ENCODE measurements at regions of chr6 and their contacts with region 1.

Region 1: DNA sequence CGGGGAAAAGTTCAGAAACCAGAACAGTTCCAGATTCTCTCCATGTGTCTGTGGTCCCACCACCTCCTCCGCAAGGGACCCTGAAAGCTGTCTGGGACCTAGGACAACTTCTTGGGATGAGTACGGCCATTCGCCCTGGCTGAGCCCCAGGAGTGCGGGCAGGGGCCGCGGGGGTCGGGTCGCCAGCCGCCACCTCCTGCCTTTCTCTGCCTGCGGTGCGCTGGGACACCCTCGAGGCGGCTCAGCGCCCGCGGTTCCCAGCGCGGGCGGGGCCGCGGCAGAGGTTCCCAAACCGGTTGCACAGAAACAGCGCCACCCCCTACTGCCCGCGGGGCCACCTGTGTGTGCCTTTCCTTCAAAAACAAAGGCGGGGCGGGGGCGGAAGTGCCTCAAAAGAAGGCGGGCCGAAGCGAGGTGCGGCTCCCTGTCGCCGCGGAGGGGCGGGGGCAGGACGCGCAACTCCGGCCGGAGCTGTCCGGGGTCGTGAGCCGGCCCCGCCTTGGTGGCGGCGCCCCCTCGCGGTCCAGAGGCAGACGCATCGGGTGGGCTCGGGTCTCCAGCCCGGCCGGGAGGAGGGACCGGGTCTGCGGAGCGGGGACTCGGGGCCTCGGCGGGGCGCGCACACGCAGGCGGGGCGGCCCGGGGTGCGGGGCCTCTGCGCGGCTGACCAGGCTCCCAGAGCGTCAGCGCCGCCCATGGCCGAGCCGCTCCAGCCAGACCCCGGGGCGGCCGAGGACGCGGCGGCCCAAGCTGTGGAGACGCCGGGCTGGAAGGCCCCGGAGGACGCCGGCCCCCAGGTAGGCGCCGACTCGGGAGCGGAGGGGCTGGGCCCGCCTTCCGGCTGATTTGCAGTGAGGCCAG is at the start of gene HEBP2:
- DNase-seq: peak; percentile 98
- H3K4me3 Mint-ChIP-seq: peak within 1 kb of the TSS; percentile 81
- H3K27ac Mint-ChIP-seq: peak within 1 kb of the TSS; percentile 77
- H3K4me1 Mint-ChIP-seq: peaks cover 15% of the 10 kb centered on the region
- H3K27me3 Mint-ChIP-seq: no peaks in the 10 kb centered on the region
- total RNA-seq, gene HEBP2: 48.5 to 50.8 TPM

Region 2: GRCh38 chr6:138161338-138162110 is 242.5 kb before region 1 on chr6 and contains the start of gene ARFGEF3:
- CTCF ChIA-PET with region 1: no interaction called
- intact Hi-C with region 1: loop called (anchors 1 kb)
- DNase-seq: peak; percentile 70
- H3K4me3 Mint-ChIP-seq: peak within 1 kb of the TSS; percentile 68
- H3K27ac Mint-ChIP-seq: no peak within 1 kb of the TSS
- H3K4me1 Mint-ChIP-seq: peaks cover 11% of the 10 kb centered on the region
- H3K27me3 Mint-ChIP-seq: peaks cover 59% of the 10 kb centered on the region
- total RNA-seq, gene ARFGEF3: 0.72 TPM

Region 3: DNA sequence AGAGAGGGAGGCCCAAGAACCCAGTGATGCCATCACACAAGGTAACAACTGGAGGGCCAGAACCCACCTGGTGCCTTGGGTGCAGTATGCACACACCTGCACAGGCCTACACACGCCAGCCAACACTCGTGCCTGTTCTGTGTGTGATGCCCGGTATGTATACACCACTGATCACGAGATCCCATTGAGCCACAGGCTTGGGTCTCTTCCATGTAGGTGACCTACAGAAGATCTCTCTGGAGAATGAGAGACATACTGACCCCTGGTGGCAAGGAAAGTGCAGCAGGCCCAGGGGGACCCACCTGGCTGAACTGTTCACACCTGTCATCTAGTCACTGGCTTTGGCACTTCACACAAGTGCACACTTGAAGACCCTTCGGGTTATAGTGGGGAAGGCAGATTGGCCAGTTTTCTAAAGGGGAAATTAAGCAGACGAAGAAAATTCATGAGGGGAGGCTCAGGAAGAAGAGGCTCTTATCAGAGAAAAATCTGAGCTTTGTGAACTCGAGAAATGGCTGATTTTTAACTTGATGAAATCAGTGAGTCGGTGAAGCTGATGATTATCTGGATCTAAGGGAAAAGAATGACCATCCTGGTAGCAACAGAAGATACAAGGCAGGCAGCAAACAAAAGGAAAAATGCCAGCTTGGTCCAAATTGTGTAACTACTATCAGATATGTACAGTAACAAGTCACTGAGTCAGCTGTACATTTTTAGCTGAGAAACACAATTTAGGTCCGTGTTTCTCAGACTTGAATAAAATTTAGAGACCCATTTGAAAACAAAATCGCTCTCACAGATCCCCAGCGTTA is 116.7 kb before region 1 on chr6:
- CTCF ChIA-PET with region 1: no interaction called
- intact Hi-C with region 1: loop called (anchors 2 kb)
- DNase-seq: peak; percentile 70
- H3K4me3 Mint-ChIP-seq: no peak overlapping the region
- H3K27ac Mint-ChIP-seq: no peak overlapping the region
- H3K4me1 Mint-ChIP-seq: peaks cover 6% of the 10 kb centered on the region
- H3K27me3 Mint-ChIP-seq: no peaks in the 10 kb centered on the region

Region 4: DNA sequence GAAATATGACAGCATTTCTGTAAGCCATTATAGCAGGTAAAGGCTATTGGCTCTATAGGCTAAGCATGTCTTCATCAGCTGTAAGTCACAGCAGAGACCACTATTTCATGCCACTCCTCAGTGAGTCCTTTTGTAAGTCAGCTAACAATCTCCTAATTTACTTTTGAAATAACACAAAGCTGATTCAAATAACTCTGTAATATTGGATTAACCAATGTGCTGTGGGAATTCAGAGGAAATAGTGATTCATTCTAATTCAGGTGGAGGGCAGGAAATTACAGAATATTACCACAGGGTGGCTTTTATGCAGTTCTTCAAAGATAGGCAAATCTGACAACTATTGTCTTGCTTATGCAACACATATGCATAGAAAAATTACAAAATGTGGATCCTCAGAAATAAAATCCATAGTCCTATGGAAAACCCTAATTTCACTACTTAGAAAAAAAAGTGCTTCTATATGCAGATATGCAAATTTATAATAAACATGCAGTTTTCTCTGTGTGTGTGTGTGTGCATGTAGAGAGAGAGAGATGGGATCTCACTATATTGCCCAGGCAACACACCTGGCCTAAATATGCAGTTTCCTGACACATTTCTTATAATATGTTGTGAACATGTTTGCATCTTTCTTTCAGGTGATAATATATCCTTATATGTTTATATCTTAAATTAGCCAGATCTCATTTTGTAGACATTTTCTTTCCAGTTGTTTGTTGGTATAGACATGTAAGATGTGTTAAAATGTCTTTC is 31.1 kb before region 1 on chr6:
- CTCF ChIA-PET with region 1: interaction called, 5 read pairs
- intact Hi-C with region 1: loop called (anchors 1 kb)
- DNase-seq: no peak
- H3K4me3 Mint-ChIP-seq: no peak overlapping the region
- H3K27ac Mint-ChIP-seq: no peak overlapping the region
- H3K4me1 Mint-ChIP-seq: peaks cover 2% of the 10 kb centered on the region
- H3K27me3 Mint-ChIP-seq: no peaks in the 10 kb centered on the region

Region 5: GRCh38 chr6:138455746-138456400 is 51.8 kb after region 1 on chr6:
- CTCF ChIA-PET with region 1: no interaction called
- intact Hi-C with region 1: loop called (anchors 1 kb)
- DNase-seq: peak; percentile 16
- H3K4me3 Mint-ChIP-seq: peak overlapping the region; percentile 9
- H3K27ac Mint-ChIP-seq: peak overlapping the region; percentile 62
- H3K4me1 Mint-ChIP-seq: peaks cover 28% of the 10 kb centered on the region
- H3K27me3 Mint-ChIP-seq: no peaks in the 10 kb centered on the region

Region 6: GRCh38 chr6:138654715-138655634 is 250.9 kb after region 1 on chr6:
- CTCF ChIA-PET with region 1: no interaction called
- intact Hi-C with region 1: loop called (anchors 5 kb)
- DNase-seq: peak; percentile 76
- H3K4me3 Mint-ChIP-seq: no peak overlapping the region
- H3K27ac Mint-ChIP-seq: peak overlapping the region; percentile 36
- H3K4me1 Mint-ChIP-seq: peaks cover 25% of the 10 kb centered on the region
- H3K27me3 Mint-ChIP-seq: peaks cover 28% of the 10 kb centered on the region

Region 7: DNA sequence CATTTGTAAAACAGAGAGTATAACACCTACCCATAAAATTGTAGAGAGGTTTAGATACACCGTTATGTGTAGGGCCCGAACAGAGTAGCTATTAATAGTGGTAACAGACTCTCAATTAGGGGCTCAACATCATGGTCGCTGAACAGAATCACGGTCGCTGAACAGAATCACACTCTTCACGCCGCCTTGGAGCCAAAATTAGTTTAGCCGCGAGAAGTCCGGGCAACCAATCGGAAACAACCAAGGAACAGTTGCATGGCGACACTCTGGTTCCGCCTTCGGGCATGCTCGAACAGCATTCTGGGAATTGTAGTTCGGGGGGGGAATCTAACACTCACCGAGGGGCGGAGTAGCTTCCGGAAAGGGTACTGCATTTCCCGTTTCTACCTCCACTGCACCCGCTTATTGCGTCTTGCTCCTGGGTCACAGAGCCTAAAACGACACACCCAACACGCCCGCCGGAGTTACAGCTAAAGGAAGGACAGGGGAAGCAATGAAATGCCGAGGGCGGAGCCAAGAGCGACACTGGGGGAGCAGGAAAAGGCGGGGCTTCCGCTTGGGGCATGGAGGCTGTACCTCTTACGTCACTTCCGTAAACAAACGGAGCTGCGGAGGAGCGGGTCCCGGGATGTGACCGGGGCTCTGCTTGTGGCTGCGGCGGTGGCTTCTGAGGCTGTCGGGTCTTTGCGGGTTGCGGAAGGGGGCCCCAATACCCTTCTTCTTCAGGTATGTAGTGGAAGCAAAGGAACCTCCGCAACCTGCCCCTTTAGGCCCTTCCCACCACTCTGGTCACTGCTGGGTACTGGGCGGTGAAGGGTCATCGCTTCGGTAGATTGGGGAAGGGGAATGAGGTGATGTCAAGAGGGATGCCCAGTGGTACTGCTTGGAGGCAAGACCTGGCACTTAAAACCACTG is 369.4 kb after region 1 on chr6 and contains the start of gene CCDC28A:
- CTCF ChIA-PET with region 1: no interaction called
- intact Hi-C with region 1: loop called (anchors 1 kb)
- DNase-seq: peak; percentile 97
- H3K4me3 Mint-ChIP-seq: peak within 1 kb of the TSS; percentile 98
- H3K27ac Mint-ChIP-seq: peak within 1 kb of the TSS; percentile 100
- H3K4me1 Mint-ChIP-seq: peaks cover 30% of the 10 kb centered on the region
- H3K27me3 Mint-ChIP-seq: no peaks in the 10 kb centered on the region
- total RNA-seq, gene CCDC28A: 18.9 to 19.2 TPM